ENCODE measurements at regions of chr22 and their contacts with region 1.

Region 1: DNA sequence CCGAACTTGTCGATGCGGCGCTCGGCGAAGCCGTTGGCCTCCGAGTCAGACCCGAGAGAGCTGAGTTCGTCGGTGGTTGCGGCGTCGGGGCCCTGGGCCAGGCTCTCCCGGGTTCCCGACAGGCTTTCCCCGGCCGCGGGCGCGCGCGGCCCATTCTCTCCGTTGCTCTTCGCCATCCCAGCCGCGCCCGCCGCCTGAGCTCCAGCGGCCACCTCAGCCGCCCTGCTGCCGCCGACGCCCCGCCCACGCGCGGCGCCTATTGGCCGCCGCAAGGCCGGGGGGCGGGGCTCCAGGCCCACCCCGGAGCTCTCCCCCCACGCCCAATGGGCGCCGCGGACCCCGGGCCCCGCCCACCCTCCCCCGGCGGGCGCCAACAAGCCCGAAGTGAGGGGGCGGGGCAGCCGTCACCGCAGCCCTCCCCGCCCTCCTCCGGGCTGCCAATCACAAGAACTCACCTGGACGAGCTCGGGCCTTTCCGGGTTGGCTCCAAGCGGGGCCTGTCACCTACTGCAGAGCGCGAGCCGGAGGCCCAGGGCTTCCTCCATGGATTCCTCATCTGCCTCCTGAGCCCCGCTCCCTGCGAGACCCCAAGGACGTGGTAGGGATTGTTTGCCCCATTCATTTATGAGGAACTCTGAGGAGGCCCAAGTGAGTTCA is at the start of gene TBC1D10A:
- DNase-seq: peak; percentile 96
- ATAC-seq: peak; percentile 95
- total RNA-seq, gene TBC1D10A: 7.1 TPM

Region 2: DNA sequence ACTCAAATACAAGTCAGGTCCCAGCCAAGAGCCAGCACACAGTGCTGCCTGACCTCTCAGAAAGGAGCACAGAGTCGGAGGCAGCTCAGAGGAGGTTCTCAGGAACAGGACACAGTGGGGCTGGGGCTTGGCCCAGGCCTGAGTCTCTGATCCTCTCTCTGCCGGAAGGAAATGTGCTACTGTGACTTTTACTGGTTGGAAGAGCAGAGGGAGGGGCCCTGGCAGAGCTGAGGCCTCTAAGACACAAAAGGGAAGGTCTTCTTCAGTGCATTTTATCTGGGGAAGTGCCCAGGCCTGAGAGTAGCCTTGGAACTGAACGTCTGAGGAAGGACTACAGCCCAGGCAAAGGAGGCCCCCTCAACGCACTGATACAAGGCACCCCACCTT is 21.3 kb before region 1 on chr22:
- intact Hi-C with region 1: loop called (anchors 2 kb)
- DNase-seq: peak; percentile 83
- ATAC-seq: peak; percentile 83

Region 3: DNA sequence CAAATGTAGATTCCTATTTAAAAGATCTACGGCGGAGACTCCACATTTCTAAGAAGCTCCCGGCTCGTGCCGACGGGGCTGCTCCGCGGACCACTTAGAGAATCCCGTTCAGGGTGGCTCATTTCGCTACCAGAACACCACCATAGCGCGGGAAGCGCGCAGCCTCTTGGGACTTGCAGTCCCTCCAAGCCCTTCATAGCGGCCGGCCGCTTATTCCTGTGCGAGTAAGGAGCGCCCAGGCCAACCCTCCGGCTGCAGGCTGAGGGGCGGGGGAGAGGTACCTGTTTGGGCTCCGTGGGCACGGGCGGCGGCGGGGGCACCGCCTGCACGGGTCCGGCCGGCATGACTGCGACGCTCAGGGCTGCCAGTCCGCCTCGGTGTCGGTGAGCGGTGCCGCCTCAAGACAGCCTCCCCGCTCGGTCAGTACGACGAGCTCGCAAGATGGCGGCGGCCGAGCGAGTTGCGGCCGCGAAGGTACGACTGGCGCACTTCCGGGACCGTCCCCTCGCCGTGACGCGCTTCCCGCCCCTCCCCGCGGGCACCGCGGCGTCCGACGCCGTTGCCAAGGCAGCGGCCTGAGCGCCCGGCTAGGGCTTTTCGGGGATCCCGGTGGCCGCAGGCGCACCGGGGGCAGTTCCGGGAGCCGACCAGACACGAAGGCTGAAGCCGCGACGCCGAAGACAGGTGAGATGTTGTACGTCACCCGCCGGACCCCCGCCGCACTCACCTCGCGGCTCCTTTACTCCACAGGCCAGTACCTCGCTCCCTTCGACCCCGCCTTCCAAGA is 29.8 kb after region 1 on chr22 and contains the starts of genes CCDC157 and SF3A1:
- intact Hi-C with region 1: loop called (anchors 5 kb)
- DNase-seq: peak; percentile 96
- ATAC-seq: peak; percentile 98
- total RNA-seq, gene CCDC157: 0.46 TPM
- total RNA-seq, gene SF3A1: 95.4 TPM

Region 4: DNA sequence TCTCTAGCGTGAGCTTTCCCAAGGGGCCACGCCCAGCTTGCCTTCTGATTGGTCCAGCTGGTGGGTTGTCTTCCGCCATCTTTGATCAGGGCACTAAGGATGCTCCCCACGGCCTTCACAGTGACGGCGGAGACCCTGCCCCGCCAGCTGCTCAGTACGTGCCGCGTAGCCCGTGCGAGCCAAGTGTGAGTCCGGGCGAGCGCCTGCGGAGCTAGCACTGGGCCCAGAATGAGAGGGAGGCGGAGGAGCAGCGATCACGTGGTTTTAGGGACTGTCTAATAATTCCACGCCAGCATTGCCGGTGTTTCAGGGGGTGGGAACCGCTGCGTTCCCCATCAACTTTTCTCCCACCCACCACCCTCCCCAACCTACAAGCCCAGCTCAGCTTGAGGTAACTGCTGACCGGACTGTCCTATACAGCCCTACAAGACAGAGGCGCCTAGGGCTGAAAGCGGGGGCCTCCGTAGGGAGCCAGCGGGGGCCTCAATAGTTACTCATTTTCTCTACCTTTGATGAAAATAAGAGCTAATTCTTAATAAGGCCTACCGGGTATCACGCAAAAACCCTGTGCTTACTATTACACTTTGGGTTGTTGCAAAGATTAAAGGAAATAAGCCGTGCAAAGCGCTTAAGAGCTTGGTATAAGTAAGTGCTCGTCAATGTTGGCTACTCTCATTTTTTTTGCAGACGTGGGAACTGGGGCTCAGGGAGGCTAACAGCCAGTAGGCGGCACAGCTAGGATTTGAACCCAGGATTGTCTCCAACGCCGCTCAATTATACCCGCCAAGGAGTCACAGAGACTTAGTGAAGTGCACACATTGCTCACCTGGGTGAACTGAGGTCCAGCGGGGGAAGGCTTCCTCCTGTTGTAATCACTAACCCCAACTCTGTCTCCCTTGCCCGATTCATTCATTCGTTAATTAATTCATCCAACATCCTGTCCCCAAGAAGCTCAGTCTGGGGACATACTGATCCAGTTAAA is 97.4 kb after region 1 on chr22:
- intact Hi-C with region 1: no loop called
- DNase-seq: peak; percentile 99
- ATAC-seq: peak; percentile 94

Measured in Right ventricle myocardium inferior (tissue), 1 donor.